IMR-90 (cell line): ENCODE measurements at regions of chr2 and their contacts with region 1.

Region 1: DNA sequence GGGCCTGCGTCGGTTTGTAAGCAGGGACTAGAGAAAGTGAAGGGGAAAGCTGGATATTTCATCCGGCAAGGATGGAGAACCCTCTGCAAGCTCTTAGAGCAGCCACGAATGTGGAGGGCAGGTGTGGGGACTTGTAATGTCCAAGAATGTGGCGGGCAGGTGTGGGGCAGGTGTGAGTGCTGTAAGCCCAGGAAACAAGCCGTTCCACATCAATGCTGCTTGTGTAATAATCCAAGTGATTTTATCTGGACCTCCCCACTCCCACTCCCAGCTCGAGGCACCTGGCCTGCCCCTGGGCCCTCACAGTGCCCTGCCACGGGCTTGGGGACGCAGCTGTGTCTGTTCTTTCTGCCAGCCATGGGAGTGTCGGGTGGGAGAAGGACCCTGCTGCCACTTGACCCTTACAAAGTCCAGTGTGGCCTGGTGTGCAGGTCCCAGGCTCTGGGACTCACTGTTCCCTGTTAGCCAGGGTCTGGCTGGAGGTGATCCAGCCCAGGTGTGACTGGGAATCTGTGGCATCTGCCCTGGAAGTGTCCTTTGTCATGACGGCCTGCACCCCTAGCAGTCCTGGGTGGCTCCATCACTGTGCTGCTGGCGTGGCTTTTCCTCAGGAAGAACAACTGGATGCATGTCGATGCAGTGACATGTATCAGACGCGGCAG is 42.8 kb downstream of the SOX11 start:
- DNase-seq: no peak
- ATAC-seq: no peak
- H3K4me3 ChIP-seq: no peak overlapping the region
- H3K27ac ChIP-seq: no peak overlapping the region
- H3K4me1 ChIP-seq: no peaks in the 10 kb centered on the region
- H3K27me3 ChIP-seq: no peaks in the 10 kb centered on the region; the same call in 1 of the 2 replicates
- CTCF ChIP-seq: no peak
- POLR2A ChIP-seq: no peak
- RAD21 ChIP-seq: no peak

Region 2: DNA sequence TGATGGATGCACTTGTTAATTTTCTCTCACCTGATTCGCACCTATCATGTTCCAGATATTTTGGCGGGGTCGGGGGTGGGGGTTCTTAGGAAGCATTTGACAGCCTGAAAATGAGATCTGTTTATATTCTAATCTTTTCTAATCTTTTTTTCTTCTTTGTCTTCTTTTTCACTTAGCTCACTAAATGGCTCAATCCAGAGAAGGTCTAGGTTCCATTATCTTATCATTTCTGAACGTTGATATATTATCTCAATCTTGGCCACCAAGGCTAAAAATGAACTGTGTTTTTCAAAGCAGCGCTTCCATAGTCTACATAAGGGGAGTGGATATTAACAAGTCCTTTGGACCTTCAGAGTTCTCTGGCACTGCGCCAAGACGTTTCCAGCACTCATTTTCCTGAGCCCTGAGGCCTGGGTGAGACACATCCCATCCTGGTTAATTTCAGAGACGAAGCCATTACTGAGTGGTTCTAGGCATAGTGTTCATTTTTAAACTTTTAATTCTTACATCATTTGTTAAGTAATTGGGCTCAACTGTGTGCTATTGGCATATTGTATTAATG is 186.2 kb after region 1 on chr2:
- CTCF ChIA-PET with region 1: no interaction called
- POLR2A ChIA-PET with region 1: no interaction called
- dilution Hi-C with region 1: no loop called
- in situ Hi-C with region 1: no loop called
- intact Hi-C with region 1: no loop called
- DNase-seq: no peak
- ATAC-seq: no peak
- H3K4me3 ChIP-seq: no peak overlapping the region
- H3K27ac ChIP-seq: no peak overlapping the region
- H3K4me1 ChIP-seq: no peaks in the 10 kb centered on the region
- H3K27me3 ChIP-seq: no peaks in the 10 kb centered on the region
- CTCF ChIP-seq: no peak
- POLR2A ChIP-seq: no peak
- RAD21 ChIP-seq: no peak

Region 3: DNA sequence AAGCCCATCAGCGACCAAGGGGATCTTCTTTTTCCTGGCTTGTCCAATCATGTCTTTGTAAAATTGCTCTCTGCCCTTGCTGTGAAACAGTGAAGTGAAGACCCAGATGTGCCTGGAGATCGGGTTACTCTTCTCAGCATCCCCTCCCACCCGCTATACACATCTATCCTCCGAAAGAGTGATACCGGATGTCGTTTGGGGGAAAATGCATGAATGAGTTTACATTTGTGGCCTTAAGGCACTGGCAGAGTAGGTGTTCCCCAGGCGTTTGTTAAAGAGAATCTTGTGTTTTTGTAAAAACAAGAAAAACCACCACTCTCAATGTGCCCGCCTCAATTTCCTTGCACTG is 602.5 kb after region 1 on chr2:
- CTCF ChIA-PET with region 1: no interaction called
- POLR2A ChIA-PET with region 1: no interaction called
- dilution Hi-C with region 1: no loop called
- in situ Hi-C with region 1: no loop called
- intact Hi-C with region 1: loop called (anchors 10 kb)
- DNase-seq: no peak
- ATAC-seq: no peak
- H3K4me3 ChIP-seq: no peak overlapping the region
- H3K27ac ChIP-seq: no peak overlapping the region
- H3K4me1 ChIP-seq: no peaks in the 10 kb centered on the region
- H3K27me3 ChIP-seq: no peaks in the 10 kb centered on the region
- CTCF ChIP-seq: no peak
- POLR2A ChIP-seq: no peak
- RAD21 ChIP-seq: no peak